ENCODE measurements at regions of chr12 and their contacts with region 1.

Region 1: DNA sequence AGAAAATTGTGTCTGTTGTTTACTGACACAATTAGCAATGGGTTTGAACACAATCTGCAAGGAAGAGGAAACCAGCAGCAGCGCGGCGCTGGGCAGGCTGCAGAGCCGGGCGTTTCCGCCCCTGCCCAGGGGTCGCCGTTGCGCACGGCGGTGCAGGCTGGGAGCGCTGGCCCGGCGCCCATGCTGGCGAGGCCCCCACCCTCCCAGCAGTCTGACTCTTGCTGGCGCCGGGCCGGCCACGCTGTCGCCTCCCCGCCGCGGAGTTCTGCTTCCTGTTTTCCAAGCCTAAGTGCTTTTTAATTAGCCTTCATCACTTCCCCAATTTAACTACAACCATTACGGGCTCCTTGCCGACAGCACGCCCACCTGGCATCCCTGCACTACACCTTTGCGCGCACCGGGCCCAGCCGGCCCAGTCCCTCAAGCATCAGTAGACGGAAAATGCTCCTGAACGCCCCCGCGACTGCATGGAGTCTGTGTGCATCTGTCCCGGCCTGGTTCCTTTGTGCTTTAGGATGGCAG is 212.1 kb downstream of the GXYLT1 start:
- DNase-seq: no peak
- H3K4me3 ChIP-seq: peak overlapping the region; percentile 5; the same call in 1 of the 2 replicates
- H3K27ac ChIP-seq: no peak overlapping the region
- H3K4me1 ChIP-seq: no peaks in the 10 kb centered on the region
- H3K27me3 ChIP-seq: no peaks in the 10 kb centered on the region
- CTCF ChIP-seq: no peak

Region 2: GRCh38 chr12:41899577-41899976 is 33.0 kb before region 1 on chr12:
- CTCF ChIA-PET with region 1: no interaction called
- POLR2A ChIA-PET with region 1: interaction called, 10 read pairs
- intact Hi-C with region 1: no loop called
- DNase-seq: no peak
- H3K4me3 ChIP-seq: no peak overlapping the region
- H3K27ac ChIP-seq: no peak overlapping the region
- H3K4me1 ChIP-seq: no peaks in the 10 kb centered on the region
- H3K27me3 ChIP-seq: no peaks in the 10 kb centered on the region
- CTCF ChIP-seq: no peak

Region 3: DNA sequence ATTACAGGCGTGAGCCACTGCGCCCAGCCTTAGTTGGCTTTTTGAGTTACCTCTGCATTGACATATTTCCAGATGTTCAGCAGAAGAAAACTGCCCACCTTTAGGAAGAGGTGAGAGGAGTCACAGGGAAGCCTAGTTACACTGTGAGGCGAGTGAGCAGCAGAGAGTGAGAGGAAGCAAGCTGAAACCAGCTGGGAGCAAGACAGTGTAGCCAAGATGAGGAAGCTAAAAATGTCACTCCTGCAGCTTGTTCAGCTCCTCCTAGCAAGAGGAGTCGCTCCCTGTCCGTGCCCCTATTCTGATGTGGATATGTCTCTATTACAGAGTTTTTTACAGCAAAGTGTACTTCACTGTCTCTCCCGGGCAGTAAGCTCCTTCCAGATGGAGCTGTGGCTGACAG is 84.5 kb after region 1 on chr12:
- CTCF ChIA-PET with region 1: no interaction called
- POLR2A ChIA-PET with region 1: no interaction called
- intact Hi-C with region 1: no loop called
- DNase-seq: no peak
- H3K4me3 ChIP-seq: no peak overlapping the region
- H3K27ac ChIP-seq: no peak overlapping the region
- H3K4me1 ChIP-seq: 0 out of 2 replicates have a peak, but pooled peaks cover 7% of the 10 kb centered on the region
- H3K27me3 ChIP-seq: no peaks in the 10 kb centered on the region
- CTCF ChIP-seq: no peak

Measured in PC-9 (cell line).